ENCODE measurements at regions of chr9 and their contacts with region 1.

Region 1: DNA sequence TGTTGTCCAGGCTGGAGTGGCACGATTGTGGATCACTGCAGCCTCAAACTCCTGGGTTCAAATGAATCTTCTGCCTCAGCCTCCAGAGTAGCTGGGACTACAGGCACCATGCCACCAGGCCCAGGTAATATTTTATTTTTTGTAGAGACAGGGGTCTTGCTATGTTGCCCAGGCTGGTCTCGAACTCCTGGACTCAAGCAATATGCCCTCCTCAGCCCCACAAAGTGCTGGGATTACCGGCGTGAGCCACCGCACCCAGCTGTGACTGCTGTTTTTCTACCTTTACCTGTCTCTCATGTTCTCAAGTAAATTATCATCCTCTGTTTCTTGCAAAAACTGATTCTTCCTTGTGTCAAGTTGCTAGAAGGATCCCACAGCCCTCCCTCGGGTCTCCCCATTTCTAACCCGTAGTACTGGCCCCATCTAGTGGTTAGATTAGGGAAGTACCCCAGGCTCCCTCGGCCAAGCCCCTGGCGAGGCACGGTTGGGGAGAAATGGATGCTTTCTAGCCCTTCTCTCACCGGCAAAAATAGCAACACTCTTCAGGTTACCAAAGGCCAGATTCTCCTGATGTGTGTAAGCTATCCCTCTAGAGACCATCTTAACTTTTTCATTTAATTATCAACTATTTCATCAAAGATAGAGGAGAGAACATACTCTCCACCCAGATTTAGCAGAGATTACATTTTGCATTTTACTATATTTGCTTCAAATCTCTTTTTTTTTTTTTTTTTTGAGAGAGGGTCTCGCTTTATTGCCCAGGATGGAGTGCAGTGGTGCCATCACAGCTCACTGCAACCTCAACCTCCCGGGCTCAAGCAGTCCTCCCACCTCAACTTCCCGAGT is 19.2 kb upstream of the TOR1B start:
- DNase-seq: peak; percentile 68
- H3K4me3 Mint-ChIP-seq: no peak overlapping the region
- H3K27ac Mint-ChIP-seq: no peak overlapping the region
- H3K4me1 Mint-ChIP-seq: peaks cover 5% of the 10 kb centered on the region
- H3K27me3 Mint-ChIP-seq: peaks cover 18% of the 10 kb centered on the region

Region 2: GRCh38 chr9:129131300-129132145 is 652.2 kb before region 1 on chr9:
- intact Hi-C with region 1: loop called (anchors 2 kb)
- DNase-seq: peak; percentile 75
- H3K4me3 Mint-ChIP-seq: no peak overlapping the region
- H3K27ac Mint-ChIP-seq: no peak overlapping the region
- H3K4me1 Mint-ChIP-seq: peaks cover 6% of the 10 kb centered on the region
- H3K27me3 Mint-ChIP-seq: no peaks in the 10 kb centered on the region

Region 3: GRCh38 chr9:129626079-129626624 is 157.6 kb before region 1 on chr9 and contains the start of gene NTMT1:
- intact Hi-C with region 1: loop called (anchors 5 kb)
- DNase-seq: peak; percentile 85
- H3K4me3 Mint-ChIP-seq: peak within 1 kb of the TSS; percentile 86
- H3K27ac Mint-ChIP-seq: peak within 1 kb of the TSS; percentile 95
- H3K4me1 Mint-ChIP-seq: peaks cover 41% of the 10 kb centered on the region
- H3K27me3 Mint-ChIP-seq: peaks cover 7% of the 10 kb centered on the region
- total RNA-seq, gene NTMT1: 67.1 and 67.3 TPM in 2 replicates

Region 4: GRCh38 chr9:129726322-129727160 is 57.2 kb before region 1 on chr9:
- intact Hi-C with region 1: loop called (anchors 1 kb)
- DNase-seq: peak; percentile 54
- H3K4me3 Mint-ChIP-seq: peak overlapping the region; percentile 56
- H3K27ac Mint-ChIP-seq: no peak overlapping the region
- H3K4me1 Mint-ChIP-seq: peaks cover 5% of the 10 kb centered on the region
- H3K27me3 Mint-ChIP-seq: peaks cover 16% of the 10 kb centered on the region

Region 5: DNA sequence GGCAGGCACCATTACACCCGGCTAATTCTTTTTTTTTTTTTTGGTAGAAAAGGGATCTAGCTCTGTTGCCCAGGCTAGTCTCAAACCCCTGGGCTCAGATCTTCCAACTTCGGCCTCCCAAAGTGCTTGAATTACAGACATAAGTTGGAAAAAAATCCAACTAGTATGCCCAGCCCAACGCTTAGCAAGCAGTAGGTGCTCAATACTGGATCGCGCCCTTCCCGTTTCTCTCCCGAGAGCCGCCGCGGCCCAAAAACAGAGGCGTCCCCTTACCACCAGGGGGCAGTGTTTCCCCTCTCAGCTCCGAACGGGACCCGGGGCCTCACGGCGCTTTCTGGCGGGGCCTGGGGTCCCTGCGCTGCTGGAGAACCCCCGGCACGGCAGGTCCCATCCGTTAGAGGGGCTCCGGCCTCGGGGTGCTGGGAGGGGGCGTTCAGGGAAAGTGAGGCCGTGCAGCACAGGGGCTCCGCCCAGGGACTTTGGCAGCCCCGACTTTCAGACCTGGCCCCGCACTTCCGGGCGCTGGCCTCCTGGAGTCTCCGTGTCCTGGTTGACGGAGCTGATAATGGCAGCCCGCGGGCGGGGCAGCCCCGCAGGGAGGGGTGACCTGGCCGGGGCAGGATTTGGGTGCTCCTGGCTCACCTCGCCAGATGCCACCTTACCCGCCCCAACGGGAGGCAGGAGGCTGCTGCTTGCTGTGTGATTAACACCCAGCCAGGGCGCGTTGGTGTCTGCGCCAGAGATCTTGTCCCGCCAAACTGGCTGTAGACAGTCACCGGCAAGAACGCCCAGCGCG is 46.1 kb before region 1 on chr9:
- intact Hi-C with region 1: loop called (anchors 1 kb)
- DNase-seq: peak; percentile 77
- H3K4me3 Mint-ChIP-seq: peak overlapping the region; percentile 64
- H3K27ac Mint-ChIP-seq: peak overlapping the region; percentile 49
- H3K4me1 Mint-ChIP-seq: peaks cover 7% of the 10 kb centered on the region
- H3K27me3 Mint-ChIP-seq: peaks cover 7% of the 10 kb centered on the region